CD4-positive, alpha-beta memory T cell (primary cell): ENCODE measurements at regions of chr11 and their contacts with region 1.

Region 1: DNA sequence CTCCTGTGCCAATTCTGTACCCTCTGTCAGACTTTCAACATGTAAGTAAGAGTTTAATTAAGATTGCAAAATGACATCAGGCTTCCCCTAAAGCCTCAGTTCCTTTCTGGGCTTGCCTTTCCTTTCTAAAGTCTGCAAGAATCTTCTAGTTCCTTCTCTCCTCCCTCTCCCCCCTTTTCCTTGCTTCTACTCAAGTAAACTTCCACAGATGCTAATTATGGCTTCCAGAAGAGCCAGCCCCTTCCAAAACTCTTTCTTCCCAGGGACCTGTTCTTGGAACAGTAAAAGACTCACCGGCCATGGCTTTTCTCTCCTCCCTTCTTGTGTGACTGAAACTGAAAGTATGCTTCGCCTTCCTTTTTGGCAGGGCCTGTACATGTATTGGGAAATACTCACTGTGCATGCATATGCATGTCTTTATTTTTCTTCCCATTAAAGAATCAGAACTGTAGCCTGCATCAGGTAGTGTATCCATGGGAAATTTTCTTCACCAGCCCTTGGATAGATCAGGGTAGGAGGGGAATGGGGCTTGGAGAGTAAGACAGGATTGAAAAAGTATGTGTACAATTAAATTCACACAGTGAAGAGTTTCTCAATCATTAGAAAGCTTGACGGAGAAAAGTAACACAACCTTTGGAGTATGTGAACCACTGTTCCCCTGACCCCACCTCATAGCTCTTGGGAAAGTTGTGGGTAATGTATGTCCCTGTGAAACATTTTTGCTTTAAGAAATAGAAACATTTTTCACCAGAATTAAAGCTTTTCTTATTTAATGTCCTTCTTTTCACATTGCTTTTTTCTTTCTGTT is at the start of gene CASP1:
- DNase-seq: peak in 4 of 5 donors; percentile 34 to 56 (median 48)
- H3K4me3 ChIP-seq: peak within 1 kb of the TSS; percentile 60 to 64
- H3K4me3 Mint-ChIP-seq: peak within 1 kb of the TSS; percentile 95 to 100 (median 98)
- H3K27ac ChIP-seq: peak within 1 kb of the TSS; percentile 74
- H3K27ac Mint-ChIP-seq: peak within 1 kb of the TSS; percentile 89 to 99 (median 98)
- H3K4me1 ChIP-seq: peaks cover 47% of the 10 kb centered on the region
- H3K4me1 Mint-ChIP-seq: peaks cover 30 to 68% (median 47%) of the 10 kb centered on the region in 4 donors
- H3K27me3 ChIP-seq: no peaks in the 10 kb centered on the region
- H3K27me3 Mint-ChIP-seq: no peaks in the 10 kb centered on the region
- total RNA-seq, gene CASP1: 74.8 to 96.8 TPM

Region 2: DNA sequence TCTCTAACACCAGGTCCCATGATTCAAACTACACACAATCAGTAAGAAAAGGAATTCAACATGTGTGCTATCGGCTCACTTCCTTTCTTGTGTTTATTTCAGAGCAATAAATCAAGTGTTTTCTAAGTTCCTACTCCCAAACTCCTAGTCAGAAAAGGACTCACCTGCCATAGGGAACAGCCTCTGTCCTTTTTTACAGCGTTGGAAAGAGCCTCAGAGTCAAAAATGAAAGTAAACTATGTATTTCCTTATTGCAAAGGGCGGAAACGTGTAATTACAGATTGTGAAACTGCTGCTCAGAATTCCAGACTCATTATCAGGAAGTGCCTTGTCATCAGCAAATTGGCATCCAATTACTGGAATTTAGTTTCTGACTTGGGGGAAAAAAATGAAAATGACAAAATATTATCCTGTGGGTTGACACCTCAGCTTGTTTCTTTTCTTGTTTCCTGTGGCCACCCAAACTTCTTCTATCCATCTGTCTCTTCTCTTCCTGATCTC is 66.6 kb before region 1 on chr11 and contains the start of gene CASP4:
- CTCF ChIA-PET with region 1: no interaction called
- POLR2A ChIA-PET with region 1: interaction called, 3 read pairs
- intact Hi-C with region 1: loop called (anchors 5 kb)
- DNase-seq: peak in 4 of 5 donors; percentile 46 to 57 (median 55)
- H3K4me3 ChIP-seq: peak within 1 kb of the TSS; percentile 78 to 81
- H3K4me3 Mint-ChIP-seq: peak within 1 kb of the TSS; percentile 92 to 98 (median 95)
- H3K27ac ChIP-seq: peak within 1 kb of the TSS; percentile 82
- H3K27ac Mint-ChIP-seq: peak within 1 kb of the TSS; percentile 90 to 99 (median 98)
- H3K4me1 ChIP-seq: peaks cover 42% of the 10 kb centered on the region
- H3K4me1 Mint-ChIP-seq: peaks cover 29 to 43% (median 36%) of the 10 kb centered on the region in 4 donors
- H3K27me3 ChIP-seq: no peaks in the 10 kb centered on the region
- H3K27me3 Mint-ChIP-seq: no peaks in the 10 kb centered on the region
- total RNA-seq, gene CASP4: 97.9 to 98.4 TPM

Region 3: GRCh38 chr11:105044921-105045524 is 10.0 kb after region 1 on chr11 and contains the start of gene CARD16:
- CTCF ChIA-PET with region 1: interaction called, 7 read pairs
- POLR2A ChIA-PET with region 1: interaction called, 13 read pairs
- intact Hi-C with region 1: loop called (anchors 1 kb)
- DNase-seq: peak; percentile 45 to 58 (median 56)
- H3K4me3 ChIP-seq: peak within 1 kb of the TSS; percentile 60 to 87
- H3K4me3 Mint-ChIP-seq: peak within 1 kb of the TSS; percentile 94 to 99 (median 98)
- H3K27ac ChIP-seq: peak within 1 kb of the TSS; percentile 73
- H3K27ac Mint-ChIP-seq: peak within 1 kb of the TSS; percentile 77 to 100 (median 98)
- H3K4me1 ChIP-seq: peaks cover 40% of the 10 kb centered on the region
- H3K4me1 Mint-ChIP-seq: peaks cover 36 to 66% (median 42%) of the 10 kb centered on the region in 4 donors
- H3K27me3 ChIP-seq: no peaks in the 10 kb centered on the region
- H3K27me3 Mint-ChIP-seq: no peaks in the 10 kb centered on the region
- total RNA-seq, gene CARD16: 56.1 to 59.0 TPM

Region 4: DNA sequence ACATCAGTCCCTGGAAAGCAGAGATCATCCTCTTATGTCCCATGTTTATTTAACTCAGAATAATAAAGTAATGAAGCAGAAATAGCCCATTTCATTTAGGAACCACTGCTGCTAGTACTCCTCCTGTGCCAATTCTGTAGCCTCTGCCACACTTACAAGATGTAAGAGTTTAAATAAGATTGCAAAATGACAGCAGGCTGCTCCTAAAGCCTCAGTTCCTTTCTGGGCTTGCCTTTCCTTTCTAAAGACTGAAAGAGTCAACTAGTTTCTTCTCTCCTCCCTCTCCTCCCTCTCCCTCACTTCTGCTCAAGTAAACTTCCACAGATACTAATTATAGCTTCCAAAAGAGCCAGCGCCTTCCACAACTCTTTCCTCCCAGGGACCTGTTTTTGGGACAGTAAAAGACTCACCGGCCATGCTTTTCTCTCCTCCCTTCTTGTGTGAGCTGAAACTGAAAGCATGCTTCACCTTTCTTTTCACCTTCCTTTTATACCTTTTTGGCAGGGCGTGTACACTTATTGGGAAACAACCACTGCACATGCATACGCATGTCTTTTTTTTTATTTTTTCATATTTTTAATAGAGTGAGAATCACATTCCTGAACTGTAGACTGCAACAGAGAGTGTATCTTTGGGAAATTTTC is 36.2 kb after region 1 on chr11:
- CTCF ChIA-PET with region 1: no interaction called
- POLR2A ChIA-PET with region 1: interaction called, 4 read pairs
- intact Hi-C with region 1: loop called (anchors 5 kb)
- DNase-seq: peak; percentile 37 to 67 (median 57)
- H3K4me3 ChIP-seq: peak overlapping the region; percentile 55 to 79
- H3K4me3 Mint-ChIP-seq: peak overlapping the region; percentile 91 to 100 (median 96)
- H3K27ac ChIP-seq: peak overlapping the region; percentile 69
- H3K27ac Mint-ChIP-seq: peak overlapping the region; percentile 81 to 98 (median 95)
- H3K4me1 ChIP-seq: peaks cover 39% of the 10 kb centered on the region
- H3K4me1 Mint-ChIP-seq: peaks cover 29 to 44% (median 36%) of the 10 kb centered on the region in 4 donors
- H3K27me3 ChIP-seq: no peaks in the 10 kb centered on the region
- H3K27me3 Mint-ChIP-seq: peaks cover 0 to 1% of the 10 kb centered on the region in 2 donors

Region 5: DNA sequence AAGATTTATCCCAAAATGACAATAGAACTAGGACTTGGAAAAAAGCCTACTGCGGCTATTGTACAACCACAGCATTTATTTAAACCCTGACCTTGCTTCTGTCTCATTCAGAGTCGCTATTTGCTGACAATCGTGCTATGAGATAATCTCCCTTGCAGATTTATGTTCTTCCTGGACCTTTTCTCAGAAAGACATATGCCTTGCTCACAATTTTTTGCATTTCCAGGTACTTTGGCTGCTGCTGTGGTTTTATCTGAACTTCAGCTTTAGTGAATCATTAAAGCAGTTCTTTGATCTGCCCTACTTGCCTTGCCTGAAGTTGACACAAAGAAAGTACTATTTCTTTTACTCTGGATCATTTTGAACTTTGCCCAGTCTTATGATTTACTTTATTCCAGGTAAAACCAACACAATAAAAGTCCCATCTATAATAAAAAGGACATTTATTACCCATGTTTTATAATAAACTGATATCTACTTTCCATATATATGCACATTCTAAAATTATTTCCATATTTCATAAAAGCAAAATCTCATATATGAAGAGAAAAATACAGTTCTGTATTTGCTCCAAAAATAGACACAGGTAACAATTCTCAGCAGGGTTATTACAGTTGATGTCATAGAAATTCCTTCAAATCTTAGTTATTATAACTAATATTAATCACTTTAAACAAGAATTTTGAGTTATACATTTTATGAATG is 168.0 kb after region 1 on chr11:
- CTCF ChIA-PET with region 1: no interaction called
- POLR2A ChIA-PET with region 1: no interaction called
- intact Hi-C with region 1: no loop called
- DNase-seq: peak in 4 of 5 donors; percentile 16 to 21 (median 19)
- H3K4me3 ChIP-seq: no peak overlapping the region
- H3K4me3 Mint-ChIP-seq: peak overlapping the region in 6 of 8 donors; percentile 8 to 75 (median 44)
- H3K27ac ChIP-seq: no peak overlapping the region
- H3K27ac Mint-ChIP-seq: peak overlapping the region in 6 of 7 donors; percentile 2 to 84 (median 64)
- H3K4me1 ChIP-seq: peaks cover 23% of the 10 kb centered on the region
- H3K4me1 Mint-ChIP-seq: peaks cover 12 to 18% (median 16%) of the 10 kb centered on the region in 4 donors
- H3K27me3 ChIP-seq: no peaks in the 10 kb centered on the region
- H3K27me3 Mint-ChIP-seq: no peaks in the 10 kb centered on the region